CD4-positive, alpha-beta memory T cell (primary cell): ENCODE measurements at regions of chr11 and their contacts with region 1.

Region 1: GRCh38 chr11:18669220-18669598 is 29.4 kb upstream of the TMEM86A start:
- DNase-seq: peak in 2 of 5 donors; percentile 13 to 63
- H3K4me3 ChIP-seq: no peak overlapping the region
- H3K4me3 Mint-ChIP-seq: peak overlapping the region in 7 of 8 donors; percentile 20 to 69 (median 63)
- H3K27ac ChIP-seq: no peak overlapping the region
- H3K27ac Mint-ChIP-seq: peak overlapping the region; percentile 3 to 91 (median 70)
- H3K4me1 ChIP-seq: peaks cover 47% of the 10 kb centered on the region
- H3K4me1 Mint-ChIP-seq: peaks cover 27 to 76% (median 52%) of the 10 kb centered on the region in 4 donors
- H3K27me3 ChIP-seq: no peaks in the 10 kb centered on the region
- H3K27me3 Mint-ChIP-seq: no peaks in the 10 kb centered on the region

Region 2: DNA sequence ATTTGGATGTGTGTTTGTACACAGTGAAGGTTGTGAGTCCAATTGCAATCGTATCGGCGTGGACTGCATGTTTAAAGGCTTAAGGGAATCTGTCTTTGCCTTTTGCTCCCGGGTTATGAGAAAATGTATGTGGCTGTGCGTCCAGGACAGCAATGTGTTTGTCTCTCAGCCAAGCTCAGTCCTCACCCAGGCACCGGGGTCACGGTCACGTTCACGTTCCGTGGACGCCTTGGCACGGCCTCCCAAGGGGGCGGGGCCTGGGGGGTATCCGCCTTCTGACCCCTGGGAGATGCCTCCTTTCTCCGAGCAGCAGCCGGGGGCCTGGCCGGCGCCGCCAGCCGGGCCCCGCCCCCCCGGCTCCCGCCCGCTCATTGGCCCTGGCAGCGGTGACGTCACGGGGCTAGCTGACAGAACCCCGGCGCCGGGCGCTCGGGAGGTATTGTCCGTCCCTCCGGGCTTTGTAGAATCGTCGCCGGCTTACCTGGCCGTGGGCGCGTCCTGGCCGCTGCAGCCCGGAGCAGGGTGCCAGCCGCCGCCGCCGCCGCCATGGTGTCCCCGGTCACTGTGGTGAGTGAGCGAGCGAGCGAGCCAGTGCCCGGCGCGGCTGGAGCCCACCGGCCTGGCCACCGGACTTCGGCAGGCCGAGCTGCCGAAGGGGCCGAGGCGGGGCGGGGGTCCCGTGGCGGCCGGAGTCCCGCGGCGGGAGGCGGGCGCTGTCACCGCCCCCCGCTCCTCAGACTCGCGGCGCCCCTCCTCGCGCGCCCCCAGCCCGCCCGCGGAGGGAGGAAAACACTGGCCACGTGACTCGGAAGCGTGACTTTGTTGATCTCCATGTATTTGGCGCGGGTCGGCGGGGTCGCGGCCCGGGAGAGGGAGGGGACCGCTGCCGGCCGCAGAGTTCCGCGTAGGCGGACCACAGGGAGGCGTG is 29.4 kb after region 1 on chr11 and contains the start of gene TMEM86A:
- CTCF ChIA-PET with region 1: interaction called, 4 read pairs
- POLR2A ChIA-PET with region 1: interaction called, 12 read pairs
- intact Hi-C with region 1: loop called (anchors 1 kb)
- DNase-seq: peak; percentile 87 to 91 (median 88)
- H3K4me3 ChIP-seq: peak within 1 kb of the TSS in 1 of 2 donors; percentile 64
- H3K4me3 Mint-ChIP-seq: peak within 1 kb of the TSS; percentile 79 to 88 (median 84)
- H3K27ac ChIP-seq: peak within 1 kb of the TSS; percentile 63
- H3K27ac Mint-ChIP-seq: peak within 1 kb of the TSS; percentile 64 to 95 (median 92)
- H3K4me1 ChIP-seq: peaks cover 15% of the 10 kb centered on the region
- H3K4me1 Mint-ChIP-seq: peaks cover 12 to 22% (median 17%) of the 10 kb centered on the region in 4 donors
- H3K27me3 ChIP-seq: no peaks in the 10 kb centered on the region
- H3K27me3 Mint-ChIP-seq: no peaks in the 10 kb centered on the region
- total RNA-seq, gene TMEM86A: 2.5 to 4.0 TPM